ENCODE measurements at regions of chr9 and their contacts with region 1.

Region 1: DNA sequence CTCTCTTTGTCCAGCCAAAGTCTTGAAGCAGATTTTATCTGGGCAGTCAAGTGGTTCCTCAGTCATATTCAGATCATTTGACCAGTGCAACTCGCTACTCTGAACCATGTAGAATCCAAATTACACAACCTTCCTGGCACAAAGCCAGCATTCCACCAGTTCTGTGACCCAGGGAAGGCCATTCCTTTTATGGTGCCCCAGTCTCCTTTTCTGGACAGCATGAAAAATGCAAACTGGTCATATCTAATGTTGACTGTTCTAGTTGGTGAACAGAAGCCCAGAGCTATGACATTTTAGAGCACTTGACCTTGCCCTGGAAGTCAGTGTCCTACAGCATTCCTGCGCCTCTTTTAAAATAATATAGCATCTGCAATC is 364.6 kb downstream of the BRINP1 start:
- DNase-seq: peak; percentile 65
- ATAC-seq: peak; percentile 94

Region 2: DNA sequence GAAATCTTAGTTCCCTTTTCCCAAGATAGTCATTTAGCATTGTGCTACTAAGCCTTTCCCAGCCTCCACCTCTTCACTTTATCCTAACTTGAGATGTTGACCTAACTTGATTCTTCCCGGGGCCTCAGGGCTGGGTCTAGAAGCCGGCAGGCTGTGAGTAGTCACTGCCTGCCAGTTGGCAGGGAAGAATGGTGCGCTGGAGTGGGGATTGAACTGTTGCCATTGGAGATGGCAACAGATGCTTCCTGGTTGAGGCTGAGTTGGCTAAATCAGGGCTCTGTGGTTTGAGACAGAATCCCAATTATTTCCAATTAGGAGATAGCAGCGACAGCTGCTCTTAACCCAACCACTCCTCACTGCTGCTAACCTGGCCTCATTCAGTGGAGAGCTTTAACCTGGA is 21.5 kb after region 1 on chr9:
- intact Hi-C with region 1: loop called (anchors 1 kb)
- DNase-seq: peak; percentile 65
- ATAC-seq: peak; percentile 82